HepG2 (cell line): ENCODE measurements at regions of chr12 and their contacts with region 1.

Region 1: DNA sequence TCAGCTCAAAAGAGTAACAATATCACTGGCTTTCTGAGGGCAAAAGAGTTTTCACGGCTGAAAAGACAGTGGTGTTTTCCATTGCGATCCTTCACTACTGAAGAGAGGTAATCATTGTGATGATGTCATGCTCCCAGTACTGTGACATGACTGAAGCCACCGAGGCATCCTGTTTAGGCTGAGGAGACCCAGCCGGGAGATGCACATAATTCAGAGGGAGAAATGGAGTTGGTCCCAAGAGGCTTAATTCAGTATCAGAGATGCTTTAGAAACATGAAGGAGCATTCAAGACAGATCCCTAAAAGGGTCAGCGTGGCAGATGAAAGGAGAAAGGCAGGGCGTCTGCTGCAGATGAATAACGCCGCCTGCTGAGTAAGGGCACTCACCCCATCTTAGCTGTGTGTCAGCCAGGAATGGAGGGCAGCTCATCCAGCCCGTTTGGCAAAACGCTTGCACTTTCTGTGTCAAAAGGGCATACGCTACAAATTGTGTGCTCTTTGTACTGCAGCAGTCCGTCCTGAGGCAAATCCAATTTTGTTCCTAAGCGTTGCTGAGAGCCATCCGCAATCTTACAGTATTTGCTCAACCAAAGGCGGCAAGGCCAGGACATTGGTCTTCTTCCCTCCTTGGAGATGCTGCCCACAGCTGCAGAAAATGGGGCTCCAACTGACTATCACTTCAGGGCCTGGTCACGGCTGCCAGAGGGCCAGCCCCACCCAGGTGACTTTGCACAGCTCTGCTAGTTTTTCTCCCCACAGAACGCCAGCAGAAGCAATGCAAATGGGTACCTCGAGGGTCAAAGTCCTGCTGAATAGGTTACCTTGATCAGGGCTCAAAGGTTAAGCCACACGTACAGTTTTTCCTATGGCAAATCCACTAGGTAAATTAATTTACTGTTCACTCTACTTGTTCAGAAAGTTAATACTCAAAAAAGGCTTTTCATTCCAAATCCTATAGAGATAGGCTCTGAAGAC is 23.5 kb downstream of the CCDC92 start:
- DNase-seq: peak; percentile 65
- ATAC-seq: peak; percentile 86
- H3K4me3 ChIP-seq: peak overlapping the region; percentile 33 to 66 (median 35); a peak in 5 of 6 replicates
- H3K27ac ChIP-seq: peak overlapping the region; percentile 75
- H3K4me1 ChIP-seq: peaks cover 42% of the 10 kb centered on the region
- H3K27me3 ChIP-seq: no peaks in the 10 kb centered on the region
- CTCF ChIP-seq: peak; percentile 39
- EP300 ChIP-seq: 0 out of 4 replicates have a peak, but pooled peaks of 1 of the 2 experiments have one; percentile 20
- POLR2A ChIP-seq: no peak
- RAD21 ChIP-seq: no peak

Region 2: GRCh38 chr12:123905319-123905925 is 43.7 kb before region 1 on chr12:
- CTCF ChIA-PET with region 1: no interaction called
- POLR2A ChIA-PET with region 1: no interaction called
- in situ Hi-C with region 1: no loop called
- intact Hi-C with region 1: no loop called
- DNase-seq: peak; percentile 59
- ATAC-seq: no peak; the same call in 2 of the 3 replicates
- H3K4me3 ChIP-seq: no peak overlapping the region
- H3K27ac ChIP-seq: no peak overlapping the region
- H3K4me1 ChIP-seq: peaks cover 20% of the 10 kb centered on the region
- H3K27me3 ChIP-seq: peaks cover 2 to 26% of the 10 kb centered on the region in 2 experiments; a peak in 4 of 5 replicates
- CTCF ChIP-seq: peak; percentile 71
- EP300 ChIP-seq: no peak
- POLR2A ChIP-seq: no peak
- RAD21 ChIP-seq: no peak

Region 3: DNA sequence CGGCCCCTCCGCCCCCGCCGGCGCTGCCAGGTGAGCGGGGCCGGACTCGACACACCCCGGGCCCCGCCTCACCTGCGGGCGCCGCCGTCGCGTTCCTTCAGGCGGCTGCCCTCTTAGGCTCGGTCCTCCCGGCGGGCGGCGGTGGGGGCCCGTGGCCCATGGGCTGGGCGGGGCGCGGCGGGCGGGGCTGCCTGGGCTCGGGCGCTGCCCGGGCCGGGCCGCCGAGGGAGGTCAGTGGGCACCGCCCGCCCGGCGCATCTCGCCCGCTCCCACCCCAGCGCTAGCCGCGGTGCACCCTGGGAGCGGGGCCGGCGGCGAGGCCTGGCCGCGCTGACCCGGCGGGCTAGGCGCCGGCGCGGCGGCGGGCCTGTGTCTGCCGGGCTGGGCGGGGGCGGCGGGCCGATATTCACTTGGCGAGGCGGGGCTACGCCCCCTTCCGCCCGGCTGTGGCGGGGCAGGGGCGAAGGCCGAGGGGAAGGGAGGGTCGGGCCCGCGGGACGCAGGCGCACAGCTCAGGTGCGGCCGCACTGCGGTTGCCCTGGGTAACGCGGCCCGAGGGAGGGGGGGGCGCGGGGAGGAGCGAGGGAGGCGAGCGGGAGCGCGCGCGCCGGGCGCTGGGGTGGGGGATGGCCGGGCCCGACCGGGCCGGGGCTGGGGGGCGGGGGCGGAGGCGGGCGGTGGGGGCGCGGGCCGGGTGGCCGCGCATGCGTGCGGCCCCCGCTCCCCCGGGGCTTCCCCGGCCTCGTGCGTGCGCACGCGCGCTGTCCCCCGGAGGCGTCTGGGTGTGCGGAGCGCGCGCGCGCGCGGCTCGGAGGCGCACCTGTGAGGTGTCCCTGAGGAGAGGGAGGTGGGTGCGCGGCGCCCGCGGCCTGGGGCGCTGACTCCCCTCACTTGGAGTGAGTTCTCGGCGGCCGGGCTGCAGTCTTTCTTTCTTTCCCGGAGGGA is 23.6 kb after region 1 on chr12 and contains the starts of genes CCDC92 and ZNF664:
- CTCF ChIA-PET with region 1: no interaction called
- POLR2A ChIA-PET with region 1: interaction called, 15 read pairs
- in situ Hi-C with region 1: no loop called
- intact Hi-C with region 1: loop called (anchors 1 kb)
- DNase-seq: peak; percentile 85
- ATAC-seq: peak; percentile 83
- H3K4me3 ChIP-seq: peak within 1 kb of the TSS; percentile 86 to 89 (median 89)
- H3K27ac ChIP-seq: peak within 1 kb of the TSS; percentile 89
- H3K4me1 ChIP-seq: peaks cover 37% of the 10 kb centered on the region
- H3K27me3 ChIP-seq: no peaks in the 10 kb centered on the region; a peak in 1 of 5 replicates
- CTCF ChIP-seq: peak; percentile 67
- EP300 ChIP-seq: no peak
- POLR2A ChIP-seq: peak; percentile 72 to 85
- RAD21 ChIP-seq: peak; percentile 59
- total RNA-seq, gene CCDC92: 4.6 and 5.4 TPM in 2 replicates
- total RNA-seq, gene ZNF664: 56.5 and 109 TPM in 2 replicates